Ascending aorta (tissue), 2 donors: ENCODE measurements at regions of chr1 and their contacts with region 1.

Region 1: DNA sequence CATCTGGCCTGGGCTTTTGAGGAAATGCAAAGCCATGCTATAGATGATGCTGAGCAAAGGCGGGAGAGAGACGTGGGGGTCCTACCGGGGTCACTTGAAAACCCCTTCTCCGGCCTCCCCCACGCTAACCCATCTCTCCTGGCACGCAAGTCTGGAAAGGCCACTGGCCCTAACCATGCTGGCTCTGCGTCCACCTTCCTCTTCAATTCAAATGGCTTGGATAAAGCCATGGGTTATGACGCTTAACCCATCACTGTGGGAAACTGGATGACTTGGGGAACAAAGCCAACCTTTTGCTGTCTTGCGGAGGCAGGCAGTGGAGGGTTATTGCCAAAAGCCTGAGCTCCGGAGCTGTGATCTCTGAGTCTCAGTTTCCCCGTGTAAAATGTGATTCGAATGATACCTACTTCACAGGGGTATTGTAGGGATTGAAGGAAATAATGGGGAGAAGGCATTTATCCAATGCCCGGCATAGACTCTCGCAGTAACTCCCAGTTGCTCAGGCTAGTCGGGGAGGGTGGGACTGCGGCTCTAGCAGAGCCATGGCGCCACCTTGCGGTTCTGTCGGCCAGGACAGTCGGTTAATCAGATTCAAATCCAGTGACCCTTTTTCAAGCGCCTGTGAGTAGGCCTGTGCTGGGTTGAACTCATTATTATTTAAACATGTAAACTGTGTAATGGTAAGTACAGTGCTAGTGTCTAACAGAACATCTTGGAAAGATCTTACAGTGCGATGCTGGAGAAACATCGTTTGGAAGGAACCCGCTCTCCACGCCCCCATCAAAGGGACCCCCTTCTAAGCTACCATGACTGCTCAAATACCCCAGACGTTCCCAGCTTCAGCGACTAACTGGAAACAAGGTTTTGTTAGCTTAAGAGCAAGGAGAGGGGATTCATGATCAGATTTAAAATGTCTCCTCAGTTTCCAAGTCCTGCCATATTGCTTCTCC is 20.3 kb downstream of the NEK2 start:
- DNase-seq: peak in 1 of 2 donors; percentile 94
- H3K4me3 ChIP-seq: peak overlapping the region in 1 of 2 donors; percentile 24
- H3K27ac ChIP-seq: no peak overlapping the region
- H3K4me1 ChIP-seq: no peaks in the 10 kb centered on the region
- H3K27me3 ChIP-seq: no peaks in the 10 kb centered on the region
- CTCF ChIP-seq: peak; percentile 85 to 89 (median 87)

Region 2: DNA sequence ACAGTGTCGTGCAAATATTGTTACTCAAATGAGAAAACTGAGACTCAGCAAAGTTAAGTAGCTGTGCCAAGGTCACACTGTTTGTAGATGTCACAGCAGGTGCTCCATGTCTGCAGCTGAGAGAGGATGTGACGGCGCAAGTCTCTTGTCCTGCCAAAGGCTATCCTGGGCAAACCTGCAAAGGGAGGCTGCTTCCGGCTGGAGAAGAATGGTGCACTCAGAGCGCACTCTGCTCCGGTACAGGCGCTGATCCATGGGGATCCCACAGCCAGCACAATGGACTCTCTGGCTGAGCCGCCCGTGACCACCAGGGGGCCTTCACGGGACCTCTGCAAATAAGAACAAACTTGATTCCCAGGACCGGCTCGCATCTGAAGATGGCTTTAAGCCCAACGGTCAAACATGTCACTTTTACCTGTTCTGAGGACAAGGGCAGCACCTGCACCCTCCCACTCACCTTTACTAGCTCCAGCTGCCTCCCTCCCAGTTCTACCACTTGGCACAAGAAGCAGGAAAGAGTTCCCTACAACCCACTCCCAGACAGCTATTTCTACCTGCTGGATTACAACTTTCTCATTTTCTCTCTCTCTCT is 185.1 kb before region 1 on chr1:
- intact Hi-C with region 1: loop called (anchors 1 kb)
- DNase-seq: peak; percentile 15 to 87
- H3K4me3 ChIP-seq: no peak overlapping the region
- H3K27ac ChIP-seq: no peak overlapping the region
- H3K4me1 ChIP-seq: peaks cover 0 to 5% of the 10 kb centered on the region in 2 donors
- H3K27me3 ChIP-seq: no peaks in the 10 kb centered on the region
- CTCF ChIP-seq: peak; percentile 63 to 88 (median 82)